ENCODE measurements at regions of chr9 and their contacts with region 1.

Region 1: DNA sequence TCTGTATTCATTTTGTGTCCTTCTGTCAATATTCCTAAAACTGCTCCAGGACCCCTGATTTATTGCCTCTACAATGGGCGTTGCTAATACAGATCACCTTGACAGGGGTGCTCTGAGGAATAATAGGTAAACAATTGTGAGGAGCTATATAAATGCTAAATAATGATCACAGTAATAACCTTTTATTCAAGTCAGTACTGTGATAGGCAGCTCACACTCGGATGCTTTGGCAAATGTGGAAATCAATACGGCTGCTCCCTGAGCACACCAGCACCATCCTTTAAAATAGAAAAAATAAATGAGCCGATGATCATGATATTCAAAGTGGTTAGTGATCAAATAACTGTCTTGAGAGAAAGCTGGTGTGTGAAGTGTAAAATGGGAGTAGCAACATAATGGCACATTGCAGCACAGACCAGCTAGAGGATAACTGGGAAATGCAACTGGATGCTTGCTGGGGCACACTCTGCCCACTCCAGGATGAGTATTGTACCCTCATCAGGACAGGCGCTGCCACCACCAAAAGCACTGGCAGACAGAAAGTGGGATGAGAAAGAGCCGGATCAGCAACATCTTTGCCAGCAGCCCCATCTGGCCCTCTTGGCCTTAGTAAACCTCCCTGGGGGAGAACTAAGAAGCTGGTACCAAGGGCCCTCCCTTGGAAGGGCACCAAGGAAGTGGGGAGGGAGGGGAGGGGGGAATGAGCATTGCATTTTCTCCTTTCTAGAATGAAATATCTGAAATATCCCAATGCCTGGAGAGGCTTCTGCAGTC is 69.4 kb upstream of the SPATA31D4 start:
- DNase-seq: no peak
- H3K4me3 Mint-ChIP-seq: no peak overlapping the region
- H3K27ac Mint-ChIP-seq: no peak overlapping the region
- H3K4me1 Mint-ChIP-seq: peaks cover 6% of the 10 kb centered on the region
- H3K27me3 Mint-ChIP-seq: no peaks in the 10 kb centered on the region
- CTCF ChIP-seq: no peak

Region 2: DNA sequence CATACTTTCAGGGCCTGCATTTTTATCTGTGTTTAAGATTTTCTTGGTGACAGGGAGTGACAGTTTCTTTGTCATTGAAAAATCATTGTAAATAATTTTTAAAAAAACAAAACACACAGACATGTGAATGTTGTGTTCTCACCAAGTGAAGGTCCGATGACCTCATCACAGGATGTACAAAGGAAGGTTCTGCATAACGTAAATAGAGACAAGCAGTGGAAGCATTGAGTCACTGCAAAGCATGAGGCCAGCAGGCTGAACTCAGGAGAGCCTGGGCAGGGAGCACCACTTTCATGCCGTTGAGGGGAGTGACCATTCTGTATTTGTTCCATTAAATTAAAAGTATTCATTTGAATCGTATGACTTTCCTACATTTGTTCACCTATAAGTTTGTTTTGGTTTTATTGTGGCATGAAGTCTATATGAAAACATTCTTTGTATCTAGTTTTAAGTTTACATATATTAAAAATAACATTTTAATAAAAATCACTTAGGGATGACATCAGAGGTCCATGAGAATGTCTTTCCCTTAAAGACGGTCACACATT is 99.1 kb before region 1 on chr9:
- CTCF ChIA-PET with region 1: no interaction called
- POLR2A ChIA-PET with region 1: no interaction called
- intact Hi-C with region 1: no loop called
- DNase-seq: peak; percentile 62
- H3K4me3 Mint-ChIP-seq: no peak overlapping the region
- H3K27ac Mint-ChIP-seq: peak overlapping the region; percentile 27
- H3K4me1 Mint-ChIP-seq: no peaks in the 10 kb centered on the region
- H3K27me3 Mint-ChIP-seq: no peaks in the 10 kb centered on the region
- CTCF ChIP-seq: no peak

Region 3: GRCh38 chr9:81848472-81848871 is 10.4 kb before region 1 on chr9:
- CTCF ChIA-PET with region 1: interaction called, 19 read pairs
- POLR2A ChIA-PET with region 1: interaction called, 4 read pairs
- intact Hi-C with region 1: no loop called
- DNase-seq: peak; percentile 35
- H3K4me3 Mint-ChIP-seq: no peak overlapping the region
- H3K27ac Mint-ChIP-seq: no peak overlapping the region
- H3K4me1 Mint-ChIP-seq: no peaks in the 10 kb centered on the region
- H3K27me3 Mint-ChIP-seq: no peaks in the 10 kb centered on the region
- CTCF ChIP-seq: peak; percentile 26

Measured in MCF 10A (cell line).